HepG2 (cell line): ENCODE measurements at regions of chr4 and their contacts with region 1.

Region 1: DNA sequence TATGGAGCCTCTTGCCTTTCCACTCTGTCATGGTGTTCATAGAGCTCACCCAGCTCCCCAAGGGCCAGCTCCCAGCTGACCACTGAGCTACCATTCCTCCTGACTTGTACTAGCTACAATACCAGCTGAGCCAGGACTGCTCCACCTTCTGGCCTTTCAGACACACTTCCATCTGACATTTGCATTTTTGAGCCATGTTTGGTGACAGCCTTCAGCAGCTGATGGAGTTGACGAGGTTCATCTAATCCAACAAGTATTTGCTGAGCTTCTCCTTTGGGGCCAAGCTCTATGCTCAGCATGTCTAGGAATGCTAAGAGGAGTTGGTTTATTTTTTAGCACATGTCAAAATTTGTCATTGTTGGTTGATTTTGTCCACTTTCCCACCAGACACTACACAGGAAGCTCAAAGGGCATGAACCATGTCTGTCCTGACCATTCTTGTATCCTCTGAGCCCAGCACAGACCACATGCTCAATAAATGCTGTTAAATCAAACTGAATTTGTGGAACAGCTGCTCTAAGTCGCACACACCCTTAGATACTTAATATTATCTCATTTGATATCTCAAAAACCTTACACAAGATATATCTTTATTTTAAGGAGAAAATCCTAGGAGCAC is 142.6 kb upstream of the PPARGC1A start:
- DNase-seq: peak; percentile 13
- ATAC-seq: peak; percentile 79
- H3K4me3 ChIP-seq: no peak overlapping the region
- H3K27ac ChIP-seq: no peak overlapping the region
- H3K4me1 ChIP-seq: no peaks in the 10 kb centered on the region
- H3K27me3 ChIP-seq: no peaks in the 10 kb centered on the region
- CTCF ChIP-seq: peak; percentile 62
- EP300 ChIP-seq: no peak
- POLR2A ChIP-seq: no peak
- RAD21 ChIP-seq: no peak; the same call in 1 of the 2 replicates

Region 2: DNA sequence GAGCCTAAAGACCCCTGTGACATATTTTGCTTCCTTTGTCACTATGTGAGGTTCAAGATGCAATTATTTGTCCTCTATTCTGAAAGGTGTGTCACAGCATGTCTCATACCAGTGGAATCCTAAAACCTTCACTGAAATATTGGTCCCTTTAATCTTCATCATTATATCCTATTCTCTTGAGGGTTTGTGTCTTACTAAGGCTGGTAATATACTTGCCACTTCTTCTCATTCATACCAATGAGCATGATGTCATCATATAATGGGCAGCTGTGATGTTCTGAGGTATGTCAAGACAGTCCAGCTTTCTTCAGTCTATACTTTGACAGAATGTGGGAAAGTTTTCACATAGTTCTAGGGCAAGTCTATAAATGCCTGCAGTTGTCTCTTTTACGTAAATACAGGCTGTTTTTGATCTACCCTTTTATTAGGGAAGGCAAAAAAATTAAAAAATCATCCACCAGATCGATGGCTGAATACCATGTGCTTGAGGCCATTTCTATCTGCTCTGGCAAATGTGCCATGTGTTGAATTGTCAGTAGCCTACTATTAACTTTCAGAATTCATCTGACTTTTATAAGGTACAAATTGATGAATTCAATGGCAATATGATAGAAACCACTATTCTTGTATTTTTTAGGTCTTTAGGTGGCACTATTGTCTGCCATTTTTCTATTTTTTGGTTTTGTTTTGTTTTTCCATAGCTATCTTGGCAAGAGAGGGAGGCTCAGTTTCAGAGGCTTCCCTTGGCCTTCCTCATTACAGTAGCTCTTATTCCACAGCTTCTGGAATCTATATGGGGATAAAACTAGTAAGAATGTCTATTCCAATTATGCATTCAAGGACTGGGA is 351.6 kb before region 1 on chr4:
- CTCF ChIA-PET with region 1: no interaction called
- POLR2A ChIA-PET with region 1: no interaction called
- in situ Hi-C with region 1: no loop called
- intact Hi-C with region 1: loop called (anchors 5 kb)
- DNase-seq: no peak
- ATAC-seq: no peak
- H3K4me3 ChIP-seq: no peak overlapping the region
- H3K27ac ChIP-seq: no peak overlapping the region
- H3K4me1 ChIP-seq: no peaks in the 10 kb centered on the region
- H3K27me3 ChIP-seq: no peaks in the 10 kb centered on the region
- CTCF ChIP-seq: peak; percentile 21; the same call in 1 of the 2 replicates
- EP300 ChIP-seq: no peak
- POLR2A ChIP-seq: no peak
- RAD21 ChIP-seq: no peak

Region 3: GRCh38 chr4:23930750-23931488 is 101.6 kb before region 1 on chr4:
- CTCF ChIA-PET with region 1: no interaction called
- POLR2A ChIA-PET with region 1: no interaction called
- in situ Hi-C with region 1: no loop called
- intact Hi-C with region 1: no loop called
- DNase-seq: peak; percentile 75
- ATAC-seq: peak; percentile 95
- H3K4me3 ChIP-seq: peak overlapping the region in 1 of 3 experiments; percentile 30; a peak in 1 of 6 replicates
- H3K27ac ChIP-seq: no peak overlapping the region
- H3K4me1 ChIP-seq: peaks cover 20% of the 10 kb centered on the region
- H3K27me3 ChIP-seq: peaks cover 0 to 14% of the 10 kb centered on the region in 2 experiments; a peak in 3 of 5 replicates
- CTCF ChIP-seq: no peak
- EP300 ChIP-seq: 0 out of 4 replicates have a peak, but pooled peaks of 1 of the 2 experiments have one; percentile 7
- POLR2A ChIP-seq: no peak
- RAD21 ChIP-seq: no peak